Endothelial cell of umbilical vein (primary cell): ENCODE measurements at regions of chr11 and their contacts with region 1.

Region 1: DNA sequence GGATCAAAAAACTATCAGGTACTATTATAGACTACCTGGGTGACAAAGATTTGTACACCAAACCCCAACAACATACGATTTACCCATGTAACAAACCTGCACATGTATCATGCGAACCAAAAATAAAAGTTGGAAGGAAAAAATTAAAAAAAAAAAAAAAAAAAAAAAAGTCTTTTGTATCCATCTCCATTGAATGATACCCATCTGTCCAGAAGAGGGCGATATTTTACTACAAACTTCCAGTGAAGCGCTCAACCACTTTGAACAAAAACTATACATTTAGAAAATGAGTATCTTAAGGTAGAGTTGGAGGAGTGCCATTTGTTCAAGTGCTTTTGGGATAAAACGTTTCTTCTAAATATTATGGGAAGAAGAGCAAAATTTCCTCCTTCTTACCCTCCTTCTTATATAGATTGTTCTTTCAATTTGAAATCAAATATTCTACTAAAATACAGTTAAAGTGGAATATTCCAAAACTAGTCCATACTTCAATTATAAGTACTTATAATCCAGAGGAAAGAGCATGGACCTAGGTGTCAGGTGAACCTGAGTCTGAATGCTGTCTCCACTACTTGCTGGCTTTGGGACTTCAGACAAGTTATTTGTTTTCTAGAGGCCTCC is 23.3 kb downstream of the ARL14EP start:
- DNase-seq: peak; percentile 54
- H3K4me3 ChIP-seq: no peak overlapping the region
- H3K27ac ChIP-seq: no peak overlapping the region
- H3K4me1 ChIP-seq: no peaks in the 10 kb centered on the region
- H3K27me3 ChIP-seq: no peaks in the 10 kb centered on the region
- CTCF ChIP-seq: peak; percentile 20 to 35
- POLR2A ChIP-seq: no peak

Region 2: GRCh38 chr11:30855383-30856006 is 509.3 kb after region 1 on chr11:
- CTCF ChIA-PET with region 1: interaction called, 6 read pairs
- POLR2A ChIA-PET with region 1: no interaction called
- dilution Hi-C with region 1: no loop called
- intact Hi-C with region 1: loop called (anchors 1 kb)
- DNase-seq: peak; percentile 9
- H3K4me3 ChIP-seq: no peak overlapping the region
- H3K27ac ChIP-seq: no peak overlapping the region
- H3K4me1 ChIP-seq: no peaks in the 10 kb centered on the region
- H3K27me3 ChIP-seq: no peaks in the 10 kb centered on the region
- CTCF ChIP-seq: peak; percentile 3 to 8
- POLR2A ChIP-seq: no peak